Lower leg skin (tissue), 4 donors: ENCODE measurements at regions of chr22 and their contacts with region 1.

Region 1: DNA sequence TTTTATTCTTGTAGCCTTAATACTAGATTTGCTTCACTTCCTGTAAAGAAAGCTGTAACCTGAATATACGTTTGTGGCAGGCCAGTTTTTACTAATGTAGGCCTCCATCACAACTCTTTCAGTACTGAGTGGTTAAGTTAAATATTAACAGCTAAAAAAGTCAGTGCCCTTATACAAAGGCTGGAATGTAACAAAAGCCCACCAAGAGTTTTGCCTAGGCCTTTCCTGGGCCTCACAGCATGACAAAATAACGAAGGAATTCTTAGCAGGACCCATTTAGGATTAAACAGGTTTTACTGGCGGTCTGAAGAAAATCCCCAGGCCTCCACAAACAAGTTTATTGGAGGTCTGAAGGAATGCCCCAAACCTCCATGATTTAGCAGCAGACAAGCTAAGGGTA is 43.7 kb downstream of the PIWIL3 start:
- DNase-seq: no peak
- H3K4me3 ChIP-seq: no peak overlapping the region
- CTCF ChIP-seq: no peak
- POLR2A ChIP-seq: no peak

Region 2: GRCh38 chr22:24683671-24684070 is 47.2 kb before region 1 on chr22:
- intact Hi-C with region 1: loop called (anchors 5 kb)
- DNase-seq: no peak
- H3K4me3 ChIP-seq: no peak overlapping the region
- CTCF ChIP-seq: no peak
- POLR2A ChIP-seq: no peak